Activated CD4-positive, alpha-beta T cell treated with anti-CD3 and anti-CD28 coated beads, Interleukin-2, amount 10 ng/mL, durations not matched to agents 24 days and 14 days (primary cell): ENCODE measurements at regions of chr6 and their contacts with region 1.

Region 1: GRCh38 chr6:135128268-135128914 is 52.7 kb upstream of the MYB start:
- DNase-seq: peak; percentile 86
- H3K4me3 Mint-ChIP-seq: peak overlapping the region; percentile 73
- H3K27ac Mint-ChIP-seq: peak overlapping the region; percentile 91
- H3K4me1 Mint-ChIP-seq: peaks cover 42% of the 10 kb centered on the region
- H3K27me3 Mint-ChIP-seq: no peaks in the 10 kb centered on the region

Region 2: DNA sequence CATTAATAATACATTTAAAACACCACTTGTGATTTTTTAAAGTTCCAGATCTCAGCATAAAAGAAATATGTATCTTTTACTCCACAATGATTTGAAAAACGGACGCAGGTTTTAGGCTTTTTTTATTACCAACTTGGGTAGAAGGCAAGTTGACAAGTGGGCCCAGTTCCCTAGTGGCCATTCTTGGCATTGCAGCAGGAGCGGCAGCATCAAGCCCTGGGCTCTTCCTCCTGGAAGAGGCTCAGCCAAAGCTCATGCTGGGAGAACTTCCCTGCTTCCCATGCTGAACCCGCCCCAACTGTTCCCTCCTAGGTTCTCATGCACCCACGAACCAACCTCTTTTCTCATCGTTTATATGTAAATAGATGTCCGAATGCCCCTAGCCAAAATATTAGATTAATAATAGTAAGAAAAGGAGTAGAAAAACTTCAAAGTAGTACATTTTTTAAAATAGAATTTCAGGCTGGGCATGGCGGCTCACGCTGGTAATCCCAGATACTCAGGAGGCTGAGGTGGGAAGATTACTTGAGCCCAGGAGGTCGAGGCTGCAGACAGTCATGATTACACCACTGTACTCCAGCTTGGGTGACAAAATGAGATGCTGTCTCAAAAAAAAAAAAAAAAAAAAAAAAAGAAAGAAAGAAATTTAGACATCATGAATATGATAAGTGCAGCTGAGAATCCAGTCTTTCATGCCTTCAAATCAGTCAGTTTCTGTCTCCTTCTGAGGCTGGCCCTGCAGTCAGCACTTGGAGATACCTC is 34.5 kb after region 1 on chr6:
- intact Hi-C with region 1: loop called (anchors 1 kb)
- DNase-seq: peak; percentile 75
- H3K4me3 Mint-ChIP-seq: peak overlapping the region; percentile 61
- H3K27ac Mint-ChIP-seq: peak overlapping the region; percentile 93
- H3K4me1 Mint-ChIP-seq: peaks cover 47% of the 10 kb centered on the region
- H3K27me3 Mint-ChIP-seq: no peaks in the 10 kb centered on the region